ENCODE measurements at regions of chr1 and their contacts with region 1.

Region 1: DNA sequence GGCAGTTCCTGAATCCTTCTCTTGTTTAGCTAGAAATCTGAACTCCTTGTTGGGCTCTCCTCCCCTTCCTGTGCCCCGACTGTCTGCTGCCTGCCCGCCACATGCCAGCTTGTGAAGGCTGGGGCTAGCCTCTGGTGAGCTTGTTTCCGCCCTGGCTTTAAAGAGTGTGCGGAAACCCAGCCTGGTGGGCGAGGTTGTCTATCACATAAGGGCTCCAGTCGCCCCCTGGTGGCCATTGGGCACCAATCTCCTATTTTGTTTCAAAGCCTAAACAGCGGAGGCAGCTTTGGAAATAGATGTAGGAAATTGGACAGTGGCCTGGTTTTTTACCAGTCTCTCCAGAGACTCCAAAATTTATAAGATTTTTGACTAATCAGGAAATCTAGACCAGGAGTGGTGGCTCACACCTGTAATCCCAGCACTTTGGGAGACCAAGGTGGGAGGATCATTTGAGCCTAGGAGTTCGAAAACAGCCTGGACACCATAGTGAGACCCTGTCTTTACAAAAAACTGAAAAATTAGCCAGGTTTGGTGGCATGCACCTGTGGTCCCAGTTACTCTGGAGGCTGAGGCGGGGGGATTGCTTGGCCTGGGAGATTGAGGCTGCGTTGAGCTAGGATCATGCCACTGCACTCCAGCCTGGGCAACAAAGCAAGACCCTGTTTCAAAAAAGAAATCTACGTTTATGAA is 9.8 kb downstream of the ATP8B2 start:
- DNase-seq: peak; percentile 81 to 83
- ATAC-seq: peak in 7 of 8 donors; percentile 66 to 84 (median 77)
- H3K4me3 ChIP-seq: no peak overlapping the region
- H3K27ac ChIP-seq: peak overlapping the region in 6 of 10 donors; percentile 3 to 79 (median 19)
- H3K4me1 ChIP-seq: peaks cover 0 to 53% (median 9%) of the 10 kb centered on the region in 9 donors
- H3K27me3 ChIP-seq: no peaks in the 10 kb centered on the region
- CTCF ChIP-seq: peak; percentile 74 to 93 (median 89)

Region 2: DNA sequence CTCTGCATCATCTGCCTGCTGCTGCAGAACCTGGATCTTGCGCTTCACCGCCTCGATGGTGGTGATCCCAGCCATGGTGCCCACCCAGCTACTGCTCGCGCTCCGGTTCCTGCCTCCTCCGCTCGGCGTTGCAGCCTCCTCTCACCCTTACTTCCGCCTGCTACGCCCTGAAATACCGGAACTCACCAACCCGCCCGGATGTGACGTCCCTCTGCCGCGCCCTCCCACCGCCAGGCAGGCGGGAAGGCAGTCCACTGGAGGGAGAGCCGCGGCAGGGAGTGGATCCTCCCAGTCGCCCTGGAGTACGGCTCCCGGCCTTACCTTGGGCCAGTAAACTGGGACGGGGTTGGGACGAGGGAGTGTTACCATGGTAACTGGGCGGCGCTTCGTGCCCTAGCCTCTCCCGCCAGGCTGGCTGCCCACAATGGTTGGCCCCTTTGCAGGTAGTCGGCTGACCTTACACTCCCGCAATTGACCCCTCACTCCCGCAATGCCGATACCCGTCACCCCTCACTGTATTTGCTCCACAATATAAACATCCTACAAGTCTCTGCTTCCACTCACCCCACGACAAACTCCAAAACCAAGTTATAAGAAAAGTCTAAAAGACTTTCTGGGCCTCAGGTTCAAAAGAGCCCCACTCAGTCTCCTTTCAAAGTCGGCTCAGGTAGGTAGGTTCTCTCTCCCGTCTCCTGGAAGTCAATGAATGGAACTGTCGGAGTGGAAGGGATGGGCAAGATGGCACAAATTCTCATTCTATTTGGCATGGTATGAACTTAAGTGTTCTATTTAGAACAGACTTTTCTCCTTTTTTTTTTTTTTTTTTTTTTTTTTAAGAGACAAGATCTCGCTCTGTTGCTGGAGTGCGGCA is 151.9 kb before region 1 on chr1:
- intact Hi-C with region 1: loop called in 1 of 10 experiments (anchors 10 kb)
- DNase-seq: peak; percentile 95 to 96
- ATAC-seq: peak; percentile 96 to 98 (median 98)
- H3K4me3 ChIP-seq: peak overlapping the region; percentile 66 to 95 (median 80)
- H3K27ac ChIP-seq: peak overlapping the region; percentile 26 to 95 (median 89)
- H3K4me1 ChIP-seq: peaks cover 10 to 47% (median 44%) of the 10 kb centered on the region in 9 donors
- H3K27me3 ChIP-seq: no peaks in the 10 kb centered on the region
- CTCF ChIP-seq: peak in 4 of 9 donors; percentile 22 to 40 (median 34)

Region 3: DNA sequence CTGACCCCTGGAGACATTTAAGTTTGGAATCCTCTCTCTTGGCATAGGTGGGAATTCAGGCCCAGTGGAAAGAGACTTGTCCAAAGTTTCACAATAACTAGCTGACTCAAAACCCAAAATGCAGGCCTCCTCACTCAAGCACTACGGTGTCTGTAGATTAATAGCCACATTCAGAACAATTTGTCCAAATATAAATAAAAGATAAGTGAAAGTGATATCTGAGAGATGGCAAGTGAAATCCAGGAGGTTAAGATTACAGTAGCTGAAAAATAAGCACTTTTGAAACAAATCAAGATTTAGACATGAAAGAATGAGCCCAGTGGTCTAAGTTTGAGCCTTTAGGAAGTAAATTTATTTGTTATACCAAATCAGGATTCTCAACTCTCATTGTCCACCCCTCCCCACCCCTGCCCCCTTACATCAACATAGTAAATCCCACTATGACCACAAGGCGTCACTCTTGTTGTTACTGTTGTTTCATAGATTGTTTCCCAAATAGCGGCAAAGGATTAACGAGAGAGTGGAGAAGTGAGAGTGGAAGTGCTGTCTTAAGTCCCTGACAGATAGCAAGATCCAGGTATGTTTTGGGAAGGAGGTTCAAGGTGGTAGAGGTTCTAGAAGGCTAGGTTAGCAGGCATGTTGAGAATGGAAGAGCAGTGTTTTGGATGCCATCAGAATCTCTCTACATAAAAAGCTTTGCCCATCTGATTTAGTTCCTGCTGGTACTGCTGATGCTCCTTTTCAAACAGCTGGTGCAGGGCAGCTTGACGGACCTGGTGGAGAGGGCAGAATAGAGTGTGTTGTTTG is 136.2 kb before region 1 on chr1:
- intact Hi-C with region 1: loop called in 3 of 10 experiments (anchors 10 kb)
- DNase-seq: peak in 1 of 2 donors; percentile 61
- ATAC-seq: peak; percentile 49 to 81 (median 74)
- H3K4me3 ChIP-seq: no peak overlapping the region
- H3K27ac ChIP-seq: no peak overlapping the region
- H3K4me1 ChIP-seq: peaks cover 0 to 8% (median 4%) of the 10 kb centered on the region in 9 donors
- H3K27me3 ChIP-seq: no peaks in the 10 kb centered on the region
- CTCF ChIP-seq: peak in 8 of 9 donors; percentile 21 to 67 (median 56)

Region 4: GRCh38 chr1:154736841-154737240 is 401.7 kb after region 1 on chr1:
- intact Hi-C with region 1: no loop called
- DNase-seq: no peak
- ATAC-seq: no peak
- H3K4me3 ChIP-seq: no peak overlapping the region
- H3K27ac ChIP-seq: no peak overlapping the region
- H3K4me1 ChIP-seq: peaks cover under 1 to 28% (median 10%) of the 10 kb centered on the region in 9 donors
- H3K27me3 ChIP-seq: no peaks in the 10 kb centered on the region
- CTCF ChIP-seq: no peak